Dendritic cell treated with granulocyte-macrophage colony-stimulating factor and Interleukin-4, amounts not matched to agents 40 ng/mL and 50 ng/mL, for 4 days (primary cell): ENCODE measurements at regions of chr1 and their contacts with region 1.

Region 1: DNA sequence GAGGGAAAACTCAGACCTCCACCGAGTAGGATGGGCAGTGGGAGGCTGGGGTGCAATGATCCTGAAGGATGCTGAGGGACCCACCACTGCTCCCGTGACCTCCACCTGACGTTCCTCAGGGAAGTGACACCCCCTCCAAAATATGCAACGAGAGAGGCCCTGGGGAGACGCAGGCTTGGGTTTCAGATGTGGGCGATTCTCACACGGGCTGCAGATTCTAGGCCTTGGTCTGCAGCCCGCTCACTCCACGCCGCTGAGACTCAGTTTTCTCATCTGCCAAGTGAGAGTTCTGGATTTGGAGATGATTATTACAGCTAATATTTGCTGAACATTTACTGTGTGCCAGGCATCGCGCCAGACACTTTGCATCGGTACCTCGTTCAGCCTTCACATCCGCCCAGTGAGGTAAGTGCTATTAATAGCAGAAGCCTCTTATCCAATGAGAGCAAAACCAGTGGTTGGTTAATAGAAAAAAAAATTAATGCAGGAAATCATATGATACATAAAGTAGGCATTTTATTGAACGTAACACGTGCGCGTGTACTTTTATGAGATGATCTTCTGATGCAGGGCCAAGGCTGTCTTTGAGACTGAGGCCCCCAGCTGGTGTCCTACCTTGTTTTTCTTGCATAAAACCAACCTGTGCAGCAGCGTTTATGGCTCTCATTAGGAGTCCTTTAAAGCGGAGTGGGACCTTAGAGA is 102.0 kb upstream of the RUNX3 start:
- H3K4me3 Mint-ChIP-seq: no peak overlapping the region
- H3K27ac Mint-ChIP-seq: peak overlapping the region; percentile 67
- H3K4me1 Mint-ChIP-seq: no peaks in the 10 kb centered on the region
- H3K27me3 Mint-ChIP-seq: peaks cover 33% of the 10 kb centered on the region

Region 2: DNA sequence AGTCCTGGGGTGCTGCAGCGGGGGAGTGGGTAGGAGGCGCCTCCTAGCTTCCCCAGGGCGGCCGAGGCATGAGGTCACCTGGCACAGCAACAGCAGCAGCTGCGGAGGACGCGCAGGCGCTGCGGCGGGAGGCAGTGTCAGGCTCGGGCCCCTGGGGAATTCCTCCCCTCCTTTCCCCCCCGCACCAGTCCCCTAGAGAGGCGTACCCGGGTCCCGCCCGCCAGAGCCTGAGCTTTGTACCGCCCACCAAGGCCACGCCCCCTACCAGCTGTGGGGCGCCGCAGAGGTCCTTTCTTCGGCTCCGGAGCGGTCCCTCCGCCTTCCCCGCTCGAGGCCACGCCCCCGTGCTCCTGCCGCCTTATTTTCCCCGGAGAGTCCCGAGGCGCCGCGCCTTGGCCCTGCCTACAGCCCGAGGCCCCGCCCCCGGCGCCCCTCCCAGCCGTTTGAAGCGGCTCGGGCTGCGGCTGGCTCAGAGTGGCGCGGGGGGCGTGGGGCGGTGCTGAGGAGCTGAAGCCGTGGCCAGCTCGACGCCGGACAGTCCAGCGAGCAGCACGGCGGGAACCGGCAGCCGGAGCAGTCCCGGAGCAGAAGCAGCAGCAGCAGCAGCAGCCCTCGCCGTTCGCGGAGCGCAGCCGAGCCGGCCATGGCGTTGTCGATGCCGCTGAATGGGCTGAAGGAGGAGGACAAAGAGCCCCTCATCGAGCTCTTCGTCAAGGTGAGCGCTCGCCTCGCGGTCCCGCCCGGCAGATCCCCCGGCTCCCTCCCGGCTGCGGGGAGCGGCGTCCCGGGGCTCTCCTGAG is 287.0 kb before region 1 on chr1 and contains the start of gene CLIC4:
- intact Hi-C with region 1: no loop called
- H3K4me3 Mint-ChIP-seq: peak within 1 kb of the TSS; percentile 85
- H3K27ac Mint-ChIP-seq: peak within 1 kb of the TSS; percentile 91
- H3K4me1 Mint-ChIP-seq: peaks cover 66% of the 10 kb centered on the region
- H3K27me3 Mint-ChIP-seq: no peaks in the 10 kb centered on the region

Region 3: GRCh38 chr1:24955161-24955560 is 77.0 kb before region 1 on chr1:
- intact Hi-C with region 1: loop called (anchors 5 kb)
- H3K4me3 Mint-ChIP-seq: no peak overlapping the region
- H3K27ac Mint-ChIP-seq: peak overlapping the region; percentile 12
- H3K4me1 Mint-ChIP-seq: peaks cover 58% of the 10 kb centered on the region
- H3K27me3 Mint-ChIP-seq: peaks cover 14% of the 10 kb centered on the region

Region 4: GRCh38 chr1:25042331-25043227 is 10.5 kb after region 1 on chr1:
- intact Hi-C with region 1: no loop called
- H3K4me3 Mint-ChIP-seq: no peak overlapping the region
- H3K27ac Mint-ChIP-seq: no peak overlapping the region
- H3K4me1 Mint-ChIP-seq: peaks cover 5% of the 10 kb centered on the region
- H3K27me3 Mint-ChIP-seq: peaks cover 28% of the 10 kb centered on the region

Region 5: DNA sequence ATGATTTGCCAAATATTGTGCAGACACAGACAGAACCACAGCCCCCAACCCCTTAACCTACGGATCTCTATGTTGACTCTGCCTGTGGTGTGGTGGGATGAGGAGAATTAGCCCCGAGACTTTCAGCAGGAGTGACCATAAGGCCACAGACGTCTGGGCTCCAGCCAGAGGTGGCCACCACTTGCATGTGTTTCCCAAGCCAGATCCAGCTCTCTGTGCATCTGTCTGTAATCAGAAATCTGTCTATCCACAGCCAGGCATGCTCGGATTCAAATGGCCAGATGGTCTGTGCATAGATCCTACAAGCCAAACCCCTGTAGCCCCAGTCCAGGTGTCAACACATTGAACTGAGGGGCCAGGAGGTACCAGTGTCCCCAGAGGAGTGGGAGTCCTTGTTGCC is 59.5 kb after region 1 on chr1:
- intact Hi-C with region 1: no loop called
- H3K4me3 Mint-ChIP-seq: no peak overlapping the region
- H3K27ac Mint-ChIP-seq: no peak overlapping the region
- H3K4me1 Mint-ChIP-seq: peaks cover 13% of the 10 kb centered on the region
- H3K27me3 Mint-ChIP-seq: peaks cover 25% of the 10 kb centered on the region